Prostate gland (tissue), 2 donors: ENCODE measurements at regions of chr4 and their contacts with region 1.

Region 1: GRCh38 chr4:76949276-76950051 is at the start of gene SEPTIN11:
- DNase-seq: peak; percentile 88
- H3K4me3 ChIP-seq: peak within 1 kb of the TSS; percentile 62 to 71
- H3K27ac ChIP-seq: peak within 1 kb of the TSS; percentile 87 to 88
- H3K4me1 ChIP-seq: no peaks in the 10 kb centered on the region
- H3K27me3 ChIP-seq: no peaks in the 10 kb centered on the region
- CTCF ChIP-seq: no peak
- POLR2A ChIP-seq: peak; percentile 76
- total RNA-seq, gene SEPTIN11: 19.4 to 39.1 TPM

Region 2: GRCh38 chr4:76515975-76516843 is 433.3 kb before region 1 on chr4:
- intact Hi-C with region 1: loop called (anchors 10 kb)
- DNase-seq: no peak
- H3K4me3 ChIP-seq: no peak overlapping the region
- H3K27ac ChIP-seq: no peak overlapping the region
- H3K4me1 ChIP-seq: no peaks in the 10 kb centered on the region
- H3K27me3 ChIP-seq: no peaks in the 10 kb centered on the region
- CTCF ChIP-seq: no peak
- POLR2A ChIP-seq: no peak

Region 3: DNA sequence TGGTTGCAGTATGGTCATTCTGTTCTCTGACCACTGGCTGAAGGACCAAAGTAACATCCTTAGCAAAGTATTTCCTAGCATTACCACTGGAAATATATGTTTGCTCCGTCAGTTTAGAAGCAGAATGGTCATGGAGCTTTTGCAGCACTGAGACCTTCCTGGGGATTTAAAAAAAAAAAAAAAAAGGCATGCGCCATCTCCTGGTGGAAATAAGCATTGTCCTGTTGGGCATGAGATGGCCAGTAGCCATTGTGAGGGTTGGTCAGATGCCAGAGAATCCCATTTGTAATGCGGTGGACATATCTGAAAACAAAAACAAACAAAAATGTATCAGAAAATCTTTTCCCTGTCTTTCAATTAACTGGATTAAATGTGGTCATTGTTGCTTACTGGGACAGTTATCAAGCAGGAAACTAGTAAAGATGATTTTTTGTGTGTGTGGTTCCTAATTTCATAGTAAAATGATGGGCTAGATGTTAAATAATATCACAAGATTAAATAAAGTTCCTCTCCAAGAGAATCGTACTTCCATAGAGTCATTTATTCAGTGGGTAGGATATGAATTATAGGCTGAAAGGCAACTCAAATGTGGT is 191.1 kb before region 1 on chr4:
- intact Hi-C with region 1: loop called (anchors 10 kb)
- DNase-seq: no peak
- H3K4me3 ChIP-seq: no peak overlapping the region
- H3K27ac ChIP-seq: peak overlapping the region; percentile 47 to 54
- H3K4me1 ChIP-seq: no peaks in the 10 kb centered on the region
- H3K27me3 ChIP-seq: no peaks in the 10 kb centered on the region
- CTCF ChIP-seq: peak; percentile 51 to 72 (median 63)
- POLR2A ChIP-seq: no peak

Region 4: DNA sequence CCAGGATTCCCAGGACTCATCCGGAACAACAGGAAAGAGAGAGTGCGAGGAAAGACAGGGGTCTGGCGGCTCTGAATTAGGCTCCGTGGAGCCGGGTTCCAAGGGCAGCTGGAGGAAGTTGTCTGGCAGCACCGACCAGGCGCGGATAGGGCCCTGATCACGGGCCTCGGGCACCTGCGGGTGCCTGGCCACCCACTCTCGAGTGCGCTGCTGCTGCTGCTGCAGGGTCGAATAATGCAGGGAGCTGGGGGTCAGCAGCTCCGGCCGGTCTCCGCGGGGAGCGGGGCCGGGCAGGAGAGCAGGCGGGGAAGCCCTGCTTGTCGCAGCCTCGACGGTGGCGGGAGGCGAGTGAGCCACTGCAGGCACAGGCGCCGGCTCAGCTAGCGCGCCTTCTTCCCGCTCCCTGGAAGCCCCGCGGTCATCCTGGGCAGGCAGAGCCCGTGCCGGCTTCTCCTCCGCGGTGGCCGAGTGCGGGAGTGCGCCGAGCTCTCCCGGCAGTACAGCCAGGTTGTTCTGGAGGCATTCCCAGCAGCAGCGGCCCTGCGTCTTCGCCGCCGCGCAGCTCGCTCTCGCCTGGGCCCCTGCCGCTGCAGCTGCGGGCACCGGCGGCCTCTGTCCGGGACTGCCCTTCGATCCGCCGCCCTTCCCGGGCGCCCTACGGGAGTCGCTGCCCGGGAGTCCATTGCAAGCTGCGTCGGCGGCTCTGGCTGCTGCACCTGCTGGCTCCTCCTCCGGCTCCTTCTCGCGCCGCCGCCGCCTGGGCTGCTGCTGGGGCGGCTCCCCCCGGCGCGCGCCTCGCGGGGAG is 52.5 kb before region 1 on chr4:
- intact Hi-C with region 1: no loop called
- DNase-seq: peak; percentile 45
- H3K4me3 ChIP-seq: peak overlapping the region; percentile 52 to 60
- H3K27ac ChIP-seq: peak overlapping the region; percentile 78 to 81
- H3K4me1 ChIP-seq: no peaks in the 10 kb centered on the region
- H3K27me3 ChIP-seq: no peaks in the 10 kb centered on the region
- CTCF ChIP-seq: peak in 1 of 4 experiments; percentile 8
- POLR2A ChIP-seq: no peak

Region 5: DNA sequence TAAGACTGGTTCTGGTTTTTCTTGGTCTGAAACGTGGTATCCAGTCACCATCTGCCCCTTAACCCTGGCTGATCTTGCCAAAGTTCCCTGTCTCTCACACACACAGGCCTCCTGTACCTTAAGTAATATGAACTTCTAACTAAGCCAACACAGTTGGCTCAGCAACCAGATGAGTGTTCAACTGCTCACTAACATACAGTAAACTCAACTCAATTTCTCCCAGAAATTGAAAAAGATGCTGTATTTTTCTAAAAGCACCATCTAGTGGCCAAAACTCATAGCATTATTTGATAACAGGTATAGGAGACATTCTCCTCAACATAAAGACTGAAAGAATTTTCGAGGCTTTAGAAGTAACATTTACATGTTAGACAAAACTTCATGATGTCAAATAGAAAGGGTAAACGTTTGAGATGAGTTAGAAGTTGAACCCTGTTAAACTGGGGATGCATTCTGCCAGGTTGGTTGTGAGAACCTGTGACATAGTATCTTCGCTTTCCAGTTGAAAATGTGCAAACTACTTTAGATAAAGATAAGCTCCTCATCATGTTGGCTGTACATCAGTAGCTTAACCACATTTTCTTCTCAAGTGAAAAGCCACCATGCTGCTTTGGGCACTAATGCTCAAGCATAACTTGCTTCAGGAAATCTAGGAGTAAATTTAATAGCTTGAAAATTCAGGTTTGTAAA is 95.1 kb after region 1 on chr4:
- intact Hi-C with region 1: loop called (anchors 10 kb)
- DNase-seq: no peak
- H3K4me3 ChIP-seq: no peak overlapping the region
- H3K27ac ChIP-seq: no peak overlapping the region
- H3K4me1 ChIP-seq: no peaks in the 10 kb centered on the region
- H3K27me3 ChIP-seq: no peaks in the 10 kb centered on the region
- CTCF ChIP-seq: peak in 3 of 4 experiments; percentile 41 to 55 (median 54)
- POLR2A ChIP-seq: no peak

Region 6: DNA sequence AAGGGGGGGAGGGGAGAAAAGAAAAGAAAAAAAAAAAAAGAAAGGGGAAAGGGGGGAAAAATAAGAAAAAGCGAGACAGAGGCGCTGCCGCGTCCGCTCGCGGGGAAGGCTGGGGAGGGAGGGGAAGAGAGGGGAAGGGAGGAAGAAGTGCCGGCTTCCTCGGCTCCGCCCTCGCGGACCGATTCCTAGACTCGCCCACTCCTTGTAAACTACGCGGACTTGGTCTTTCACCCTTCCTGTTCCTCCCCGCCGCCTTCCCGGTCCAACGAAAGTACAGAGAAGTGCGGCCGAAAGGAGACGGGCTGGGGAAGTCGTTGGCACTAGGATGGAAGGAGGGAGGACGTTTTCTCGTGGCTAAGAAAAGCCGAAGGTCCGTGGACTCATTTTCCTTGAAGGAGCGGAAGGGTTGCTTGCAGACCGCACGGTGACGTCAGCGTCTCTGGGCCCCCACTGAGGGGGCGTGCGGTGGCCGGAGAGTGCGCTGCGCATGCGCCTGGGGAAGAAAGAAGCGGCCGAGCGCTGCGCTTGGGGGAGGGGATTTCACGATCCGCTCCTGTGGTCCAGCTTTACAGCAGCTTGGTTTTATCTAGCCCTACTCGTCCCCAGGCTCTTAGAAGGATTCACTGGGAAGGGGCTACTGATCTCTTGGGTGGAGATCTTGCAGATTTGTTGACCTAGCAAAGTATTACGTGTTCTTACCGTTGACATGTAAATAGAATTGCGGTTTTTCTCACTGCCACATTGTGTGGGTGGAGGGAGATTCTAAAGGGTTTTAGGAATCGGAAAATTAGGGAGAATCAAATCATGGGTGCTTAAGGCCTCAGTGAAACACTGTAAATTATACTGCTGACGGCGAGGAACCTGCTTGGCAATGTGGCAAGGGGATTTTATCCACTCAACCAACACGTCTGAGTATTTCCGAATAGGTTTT is 126.7 kb after region 1 on chr4 and contains the start of gene CCNI:
- intact Hi-C with region 1: loop called (anchors 10 kb)
- DNase-seq: peak; percentile 94
- H3K4me3 ChIP-seq: peak within 1 kb of the TSS; percentile 98 to 100
- H3K27ac ChIP-seq: peak within 1 kb of the TSS; percentile 100
- H3K4me1 ChIP-seq: no peaks in the 10 kb centered on the region
- H3K27me3 ChIP-seq: no peaks in the 10 kb centered on the region
- CTCF ChIP-seq: no peak
- POLR2A ChIP-seq: peak; percentile 69
- total RNA-seq, gene CCNI: 274 to 367 TPM

Region 7: DNA sequence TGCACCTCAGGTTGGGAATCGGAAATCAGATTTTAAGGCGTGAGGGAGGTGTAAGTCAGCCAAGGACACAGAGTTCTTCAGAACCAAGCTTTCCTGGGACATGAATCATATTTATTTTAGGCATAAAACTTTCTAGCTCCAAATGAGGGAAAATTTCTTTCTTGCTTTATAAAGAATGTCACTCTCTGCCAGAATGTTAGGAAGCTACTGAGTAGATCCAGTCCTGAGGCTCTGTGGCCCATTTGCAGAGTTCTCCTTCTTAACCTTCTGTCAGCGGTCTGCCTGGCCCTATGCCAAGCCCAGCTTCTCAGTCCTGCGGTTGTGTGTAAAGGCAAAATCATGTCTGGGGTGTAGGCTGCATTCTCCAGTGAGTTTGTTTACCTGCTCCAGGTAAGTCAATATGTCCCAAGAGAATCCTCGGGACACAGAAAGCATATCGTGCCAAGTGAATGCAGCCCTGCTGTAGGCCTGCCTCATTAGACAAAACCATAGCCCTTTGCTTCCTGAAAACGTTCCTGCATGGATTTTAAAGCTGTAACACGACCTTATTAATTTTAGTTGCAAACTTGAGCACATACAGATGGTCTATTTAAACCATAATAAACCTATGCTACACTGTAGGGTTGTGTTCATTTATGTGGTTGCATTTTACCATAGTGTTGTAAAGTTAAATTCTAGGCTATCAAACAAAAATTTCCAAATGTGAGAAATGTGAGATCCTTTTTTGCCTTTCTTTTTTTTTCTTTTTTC is 155.5 kb after region 1 on chr4:
- intact Hi-C with region 1: no loop called
- DNase-seq: peak; percentile 72
- H3K4me3 ChIP-seq: no peak overlapping the region
- H3K27ac ChIP-seq: peak overlapping the region; percentile 38 to 63
- H3K4me1 ChIP-seq: no peaks in the 10 kb centered on the region
- H3K27me3 ChIP-seq: no peaks in the 10 kb centered on the region
- CTCF ChIP-seq: no peak
- POLR2A ChIP-seq: no peak

Region 8: GRCh38 chr4:77203380-77204197 is 254.1 kb after region 1 on chr4:
- intact Hi-C with region 1: loop called (anchors 5 kb)
- DNase-seq: peak; percentile 72
- H3K4me3 ChIP-seq: no peak overlapping the region
- H3K27ac ChIP-seq: no peak overlapping the region
- H3K4me1 ChIP-seq: no peaks in the 10 kb centered on the region
- H3K27me3 ChIP-seq: no peaks in the 10 kb centered on the region
- CTCF ChIP-seq: peak; percentile 61 to 88 (median 78)
- POLR2A ChIP-seq: no peak